Cardiac septum (tissue), 1 donor: ENCODE measurements at regions of chr5 and their contacts with region 1.

Region 1: DNA sequence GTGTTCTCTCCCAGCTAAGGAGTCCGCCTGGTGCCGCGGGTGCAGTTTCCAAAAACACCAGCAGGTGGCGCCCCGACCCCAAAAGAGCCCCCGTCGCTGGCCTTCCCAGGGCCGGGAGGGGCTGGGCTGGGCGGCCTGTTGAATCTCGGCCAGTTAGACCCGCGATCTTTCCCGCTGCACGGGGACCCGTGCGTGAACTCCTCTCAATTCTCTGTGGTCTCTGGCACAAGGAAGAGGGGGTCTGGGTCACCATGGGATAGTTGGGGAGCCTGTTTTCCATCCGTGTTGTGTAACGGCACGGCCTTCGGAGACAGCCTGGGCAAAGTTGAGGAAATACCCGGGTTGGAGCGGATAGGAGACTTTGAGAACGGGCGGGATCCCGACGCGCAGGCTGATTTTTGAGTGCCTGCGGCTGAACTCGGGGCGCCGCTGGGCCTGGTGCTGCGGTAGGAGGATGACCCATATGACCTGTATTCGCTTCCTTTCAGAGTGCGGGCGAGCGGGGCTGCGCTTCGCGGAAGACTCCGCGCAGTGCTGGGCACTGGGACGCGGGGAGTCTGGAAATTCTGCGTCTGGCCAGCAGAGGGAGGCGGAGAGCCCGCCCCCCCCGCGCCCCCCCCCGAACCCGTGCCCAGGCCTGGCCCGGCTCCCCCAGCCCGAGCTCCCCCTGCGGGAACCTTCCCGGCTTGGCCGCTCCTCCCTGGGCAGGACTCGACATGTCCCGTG is 7.9 kb upstream of the PSD2 start:
- DNase-seq: peak; percentile 93

Region 2: DNA sequence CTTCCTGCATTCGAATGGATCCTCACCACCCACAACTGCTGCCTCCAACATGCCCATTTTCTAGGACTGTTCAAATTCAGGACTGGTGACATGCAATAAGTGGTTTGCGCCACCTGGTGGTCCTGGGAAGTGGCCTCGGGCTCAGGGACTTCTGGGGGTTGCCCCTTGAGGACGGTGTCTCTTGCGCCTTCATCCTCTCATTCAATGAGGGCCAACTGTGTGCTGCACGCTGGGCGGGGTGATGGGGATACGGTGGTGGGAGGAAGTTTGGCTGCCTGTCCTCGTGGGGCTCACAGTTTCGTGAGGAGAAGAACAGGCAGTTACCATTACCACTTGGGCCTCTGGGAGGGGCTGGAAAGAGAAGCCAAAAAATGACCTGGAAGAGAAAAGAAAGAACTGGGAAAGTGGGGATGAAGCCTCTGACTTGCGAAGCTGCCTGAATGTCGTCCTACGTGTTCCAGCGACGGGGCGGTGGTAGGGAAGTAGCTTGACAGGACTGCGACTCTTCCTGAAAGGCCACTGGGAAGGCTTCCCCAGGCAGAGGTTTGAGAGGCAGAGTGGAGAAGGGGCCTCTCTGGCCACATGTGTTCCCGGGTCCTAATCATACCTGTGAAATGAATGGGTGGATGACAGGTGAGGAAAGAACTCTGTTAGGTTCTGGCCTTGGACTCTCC is 56.9 kb after region 1 on chr5:
- intact Hi-C with region 1: loop called (anchors 1 kb)
- DNase-seq: no peak

Region 3: GRCh38 chr5:139863855-139864558 is 76.3 kb after region 1 on chr5:
- intact Hi-C with region 1: loop called (anchors 1 kb)
- DNase-seq: no peak

Region 4: GRCh38 chr5:139958432-139959148 is 170.9 kb after region 1 on chr5:
- intact Hi-C with region 1: no loop called
- DNase-seq: no peak

Region 5: DNA sequence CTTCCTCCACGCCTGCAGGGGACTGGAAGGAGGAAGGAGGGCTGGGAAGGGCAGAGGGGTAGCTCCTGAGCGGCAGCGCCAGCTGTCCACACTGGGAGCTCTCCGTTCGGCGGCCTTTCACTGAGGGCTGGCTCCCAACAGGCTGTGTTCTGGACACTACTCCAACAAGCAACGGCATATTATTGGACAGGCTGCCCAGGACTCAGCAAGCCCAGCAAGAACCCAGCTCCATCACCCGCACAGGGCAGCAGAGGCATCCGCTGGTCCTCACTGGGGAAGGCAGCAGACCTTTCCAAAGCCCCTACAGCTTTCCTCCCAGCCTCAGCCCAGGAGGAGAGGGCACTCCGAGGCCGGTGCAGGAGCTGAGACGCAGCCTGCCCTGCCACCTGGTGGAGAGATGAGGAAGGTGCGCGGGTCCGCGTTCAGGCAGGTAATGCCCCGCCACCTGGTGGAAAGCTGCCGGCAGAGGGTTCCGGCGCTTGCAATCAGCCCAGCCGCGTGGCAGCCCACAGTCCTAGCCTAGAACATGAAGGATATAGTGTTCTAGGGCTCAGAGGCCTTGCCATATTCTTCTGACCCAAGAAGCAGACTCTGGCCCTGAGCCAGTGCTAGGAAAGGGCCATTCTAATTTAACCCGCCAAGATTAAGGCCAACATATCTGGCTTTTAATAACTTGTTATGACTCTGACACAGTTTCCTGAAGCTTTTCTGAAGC is 181.0 kb after region 1 on chr5:
- intact Hi-C with region 1: loop called (anchors 1 kb)
- DNase-seq: peak; percentile 93

Region 6: GRCh38 chr5:140042643-140043500 is 255.1 kb after region 1 on chr5 and contains the start of gene NRG2:
- intact Hi-C with region 1: loop called (anchors 5 kb)
- DNase-seq: peak; percentile 80
- total RNA-seq, gene NRG2: 5.1 TPM

Region 7: GRCh38 chr5:140157032-140157803 is 369.5 kb after region 1 on chr5:
- intact Hi-C with region 1: loop called (anchors 2 kb)
- DNase-seq: peak; percentile 96